ENCODE measurements at regions of chr10 and their contacts with region 1.

Region 1: GRCh38 chr10:74058658-74059057 is 60.7 kb downstream of the VCL start:
- DNase-seq: no peak
- ATAC-seq: peak; percentile 22 to 49
- H3K4me3 ChIP-seq: no peak overlapping the region
- H3K27ac ChIP-seq: peak overlapping the region; percentile 93 to 97 (median 95)
- H3K4me1 ChIP-seq: peaks cover 47 to 59% of the 10 kb centered on the region in 2 donors
- H3K27me3 ChIP-seq: no peaks in the 10 kb centered on the region
- CTCF ChIP-seq: no peak
- POLR2A ChIP-seq: no peak

Region 2: GRCh38 chr10:73940634-73941221 is 117.9 kb before region 1 on chr10:
- in situ Hi-C with region 1: no loop called
- intact Hi-C with region 1: loop called (anchors 1 kb)
- DNase-seq: peak; percentile 63 to 79
- ATAC-seq: peak; percentile 86 to 90
- H3K4me3 ChIP-seq: peak overlapping the region in 3 of 4 donors; percentile 13 to 39 (median 30)
- H3K27ac ChIP-seq: peak overlapping the region; percentile 69 to 82 (median 80)
- H3K4me1 ChIP-seq: peaks cover 29 to 42% of the 10 kb centered on the region in 2 donors
- H3K27me3 ChIP-seq: no peaks in the 10 kb centered on the region
- CTCF ChIP-seq: peak; percentile 85 to 96 (median 95)
- POLR2A ChIP-seq: no peak

Region 3: DNA sequence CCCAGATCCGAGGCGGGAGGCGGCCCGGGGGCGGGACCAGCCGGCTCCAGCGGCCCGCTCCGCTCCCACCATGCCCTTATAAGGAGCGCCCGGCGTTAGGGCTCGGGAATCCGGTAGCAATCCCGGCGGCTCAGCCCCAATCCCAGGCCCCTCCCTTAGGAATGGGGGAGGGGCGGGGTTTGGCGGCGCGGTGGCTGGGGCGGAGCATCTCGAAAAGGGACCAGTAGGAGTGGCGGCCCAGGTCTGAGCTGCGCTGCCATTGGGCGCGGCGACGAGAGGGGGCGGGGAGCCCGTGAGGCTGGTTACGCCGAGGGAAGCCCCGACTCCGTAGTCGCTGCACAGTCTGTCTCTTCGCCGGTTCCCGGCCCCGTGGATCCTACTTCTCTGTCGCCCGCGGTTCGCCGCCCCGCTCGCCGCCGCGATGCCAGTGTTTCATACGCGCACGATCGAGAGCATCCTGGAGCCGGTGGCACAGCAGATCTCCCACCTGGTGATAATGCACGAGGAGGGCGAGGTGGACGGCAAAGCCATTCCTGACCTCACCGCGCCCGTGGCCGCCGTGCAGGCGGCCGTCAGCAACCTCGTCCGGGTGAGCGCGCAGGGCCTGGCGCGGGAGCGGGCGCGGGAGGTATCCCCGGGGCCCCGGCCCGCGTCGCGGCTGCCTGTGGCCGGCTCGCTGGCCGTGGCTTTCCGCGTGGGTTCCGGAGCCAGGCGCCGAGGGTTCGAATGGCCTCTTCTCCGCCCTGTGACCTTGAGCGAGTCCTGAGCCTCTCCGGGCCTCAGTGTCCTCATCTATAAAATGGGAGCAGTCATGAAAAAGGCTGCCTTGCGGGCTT is 60.7 kb before region 1 on chr10 and contains the start of gene VCL:
- in situ Hi-C with region 1: no loop called
- intact Hi-C with region 1: loop called (anchors 2 kb)
- DNase-seq: peak; percentile 98 to 99
- ATAC-seq: peak; percentile 90
- H3K4me3 ChIP-seq: peak within 1 kb of the TSS; percentile 77 to 88 (median 86)
- H3K27ac ChIP-seq: peak within 1 kb of the TSS; percentile 86 to 97 (median 92)
- H3K4me1 ChIP-seq: peaks cover 32 to 35% of the 10 kb centered on the region in 2 donors
- H3K27me3 ChIP-seq: no peaks in the 10 kb centered on the region
- CTCF ChIP-seq: no peak
- POLR2A ChIP-seq: peak; percentile 97 to 99
- total RNA-seq, gene VCL: 129 to 299 (median 210) TPM